ENCODE measurements at regions of chr10 and their contacts with region 1.

Region 1: GRCh38 chr10:21495752-21496342 is 29.6 kb downstream of the SKIDA1 start:
- DNase-seq: peak; percentile 92
- ATAC-seq: peak; percentile 86
- H3K4me3 Mint-ChIP-seq: peak overlapping the region; percentile 76
- H3K27ac Mint-ChIP-seq: no peak overlapping the region
- H3K4me1 Mint-ChIP-seq: peaks cover 17% of the 10 kb centered on the region
- H3K27me3 Mint-ChIP-seq: peaks cover 47% of the 10 kb centered on the region

Region 2: GRCh38 chr10:21078410-21079329 is 417.2 kb before region 1 on chr10:
- CTCF ChIA-PET with region 1: no interaction called
- POLR2A ChIA-PET with region 1: no interaction called
- intact Hi-C with region 1: loop called in 1 of 2 experiments (anchors 5 kb)
- DNase-seq: peak; percentile 62
- ATAC-seq: no peak
- H3K4me3 Mint-ChIP-seq: no peak overlapping the region
- H3K27ac Mint-ChIP-seq: no peak overlapping the region
- H3K4me1 Mint-ChIP-seq: no peaks in the 10 kb centered on the region
- H3K27me3 Mint-ChIP-seq: peaks cover 12% of the 10 kb centered on the region

Region 3: DNA sequence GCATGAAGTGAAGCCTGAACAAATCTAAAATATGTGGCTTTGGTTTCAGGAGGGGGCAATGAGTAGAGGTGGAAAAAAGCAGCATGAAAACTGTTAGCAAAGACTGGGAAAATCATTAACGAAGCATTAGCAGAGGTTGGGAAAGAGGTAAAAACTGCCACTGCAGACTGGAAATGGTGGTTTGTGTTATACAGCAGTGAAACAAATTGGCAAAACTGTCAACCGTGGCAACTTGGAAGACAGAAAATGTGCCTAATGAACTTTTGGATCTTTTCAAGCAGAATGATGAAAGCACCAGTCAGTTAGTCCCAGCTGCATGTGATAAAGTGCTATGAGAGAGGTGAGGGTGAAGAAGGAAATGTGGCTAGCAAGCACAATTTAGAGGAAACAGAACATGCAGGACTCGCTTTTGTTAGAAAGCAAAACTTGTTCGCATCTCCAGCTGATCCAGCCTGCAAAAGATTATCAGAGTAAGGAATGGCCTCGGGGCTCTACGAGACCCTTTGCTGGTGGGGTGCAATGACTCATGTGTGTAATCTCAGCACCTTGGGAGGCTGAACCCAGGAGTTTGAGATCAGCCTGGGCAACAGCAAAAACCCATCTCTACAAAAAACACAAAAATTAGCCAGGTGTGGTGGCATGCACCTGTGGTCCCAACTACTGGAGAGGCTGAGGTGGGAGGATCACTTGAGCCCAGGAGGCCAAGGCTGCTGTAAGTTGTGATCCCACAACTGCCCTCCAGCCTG is 16.1 kb before region 1 on chr10:
- CTCF ChIA-PET with region 1: no interaction called
- POLR2A ChIA-PET with region 1: no interaction called
- intact Hi-C with region 1: no loop called
- DNase-seq: no peak
- ATAC-seq: no peak
- H3K4me3 Mint-ChIP-seq: no peak overlapping the region
- H3K27ac Mint-ChIP-seq: no peak overlapping the region
- H3K4me1 Mint-ChIP-seq: no peaks in the 10 kb centered on the region
- H3K27me3 Mint-ChIP-seq: no peaks in the 10 kb centered on the region

Region 4: GRCh38 chr10:21516242-21517131 is 20.6 kb after region 1 on chr10:
- CTCF ChIA-PET with region 1: interaction called, 8 read pairs
- POLR2A ChIA-PET with region 1: interaction called, 3 read pairs
- intact Hi-C with region 1: loop called (anchors 1 kb)
- DNase-seq: peak; percentile 75
- ATAC-seq: peak; percentile 71
- H3K4me3 Mint-ChIP-seq: peak overlapping the region; percentile 78
- H3K27ac Mint-ChIP-seq: no peak overlapping the region
- H3K4me1 Mint-ChIP-seq: peaks cover 34% of the 10 kb centered on the region
- H3K27me3 Mint-ChIP-seq: peaks cover 68% of the 10 kb centered on the region

Region 5: GRCh38 chr10:21533467-21534279 is 37.8 kb after region 1 on chr10 and contains the start of gene MLLT10:
- CTCF ChIA-PET with region 1: interaction called, 4 read pairs
- POLR2A ChIA-PET with region 1: no interaction called
- intact Hi-C with region 1: loop called (anchors 1 kb)
- DNase-seq: peak; percentile 95
- ATAC-seq: peak; percentile 87
- H3K4me3 Mint-ChIP-seq: peak within 1 kb of the TSS; percentile 95
- H3K27ac Mint-ChIP-seq: peak within 1 kb of the TSS; percentile 98
- H3K4me1 Mint-ChIP-seq: peaks cover 18% of the 10 kb centered on the region
- H3K27me3 Mint-ChIP-seq: no peaks in the 10 kb centered on the region
- total RNA-seq, gene MLLT10: 33.8 to 34.1 TPM

Region 6: DNA sequence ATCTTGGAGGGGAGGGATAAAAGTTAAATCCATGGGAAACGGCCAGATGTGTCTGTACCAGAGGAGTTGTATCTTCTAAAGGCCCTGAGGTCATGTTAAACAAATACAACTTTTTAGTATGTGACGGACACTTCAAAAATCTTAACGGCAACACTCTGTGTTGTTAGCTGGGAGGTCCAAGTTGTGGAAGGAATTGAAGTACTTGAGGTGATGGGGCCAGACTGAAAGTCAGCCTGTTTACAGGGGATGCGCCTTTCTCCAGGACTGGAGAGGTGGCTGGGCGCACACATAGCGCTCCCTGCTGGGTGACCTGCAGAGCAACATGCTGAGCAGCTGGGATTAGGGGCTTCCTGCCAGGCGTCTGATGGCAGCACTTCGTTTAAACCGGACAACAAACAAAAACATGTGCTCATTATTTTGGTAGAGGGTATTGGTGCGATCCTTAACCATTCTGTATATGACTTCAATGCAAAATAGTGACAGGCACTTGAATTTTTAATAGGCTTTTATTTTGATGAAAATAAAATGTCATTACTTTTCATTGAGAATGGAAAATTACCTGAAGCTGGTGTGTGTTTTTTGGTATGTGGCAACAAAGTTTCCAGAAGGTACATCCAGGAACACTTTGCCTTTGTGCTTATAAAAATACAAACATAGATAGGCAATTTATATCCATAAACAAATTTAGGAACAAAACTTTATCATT is 236.4 kb after region 1 on chr10:
- CTCF ChIA-PET with region 1: interaction called, 27 read pairs
- POLR2A ChIA-PET with region 1: no interaction called
- intact Hi-C with region 1: loop called (anchors 1 kb)
- DNase-seq: peak; percentile 74
- ATAC-seq: peak; percentile 88
- H3K4me3 Mint-ChIP-seq: no peak overlapping the region
- H3K27ac Mint-ChIP-seq: no peak overlapping the region
- H3K4me1 Mint-ChIP-seq: peaks cover 26% of the 10 kb centered on the region
- H3K27me3 Mint-ChIP-seq: no peaks in the 10 kb centered on the region

Region 7: GRCh38 chr10:22228943-22229801 is 733.3 kb after region 1 on chr10:
- CTCF ChIA-PET with region 1: no interaction called
- POLR2A ChIA-PET with region 1: no interaction called
- intact Hi-C with region 1: loop called in 1 of 2 experiments (anchors 2 kb)
- DNase-seq: peak; percentile 92
- ATAC-seq: peak; percentile 75
- H3K4me3 Mint-ChIP-seq: peak overlapping the region; percentile 89
- H3K27ac Mint-ChIP-seq: peak overlapping the region; percentile 90
- H3K4me1 Mint-ChIP-seq: peaks cover 20% of the 10 kb centered on the region
- H3K27me3 Mint-ChIP-seq: no peaks in the 10 kb centered on the region

Region 8: GRCh38 chr10:22340362-22341189 is 844.7 kb after region 1 on chr10:
- CTCF ChIA-PET with region 1: no interaction called
- POLR2A ChIA-PET with region 1: no interaction called
- intact Hi-C with region 1: loop called in 1 of 2 experiments (anchors 10 kb)
- DNase-seq: peak; percentile 72
- ATAC-seq: peak; percentile 48
- H3K4me3 Mint-ChIP-seq: peak overlapping the region; percentile 78
- H3K27ac Mint-ChIP-seq: peak overlapping the region; percentile 89
- H3K4me1 Mint-ChIP-seq: peaks cover 34% of the 10 kb centered on the region
- H3K27me3 Mint-ChIP-seq: peaks cover 58% of the 10 kb centered on the region